ENCODE measurements at regions of chr16 and their contacts with region 1.

Region 1: DNA sequence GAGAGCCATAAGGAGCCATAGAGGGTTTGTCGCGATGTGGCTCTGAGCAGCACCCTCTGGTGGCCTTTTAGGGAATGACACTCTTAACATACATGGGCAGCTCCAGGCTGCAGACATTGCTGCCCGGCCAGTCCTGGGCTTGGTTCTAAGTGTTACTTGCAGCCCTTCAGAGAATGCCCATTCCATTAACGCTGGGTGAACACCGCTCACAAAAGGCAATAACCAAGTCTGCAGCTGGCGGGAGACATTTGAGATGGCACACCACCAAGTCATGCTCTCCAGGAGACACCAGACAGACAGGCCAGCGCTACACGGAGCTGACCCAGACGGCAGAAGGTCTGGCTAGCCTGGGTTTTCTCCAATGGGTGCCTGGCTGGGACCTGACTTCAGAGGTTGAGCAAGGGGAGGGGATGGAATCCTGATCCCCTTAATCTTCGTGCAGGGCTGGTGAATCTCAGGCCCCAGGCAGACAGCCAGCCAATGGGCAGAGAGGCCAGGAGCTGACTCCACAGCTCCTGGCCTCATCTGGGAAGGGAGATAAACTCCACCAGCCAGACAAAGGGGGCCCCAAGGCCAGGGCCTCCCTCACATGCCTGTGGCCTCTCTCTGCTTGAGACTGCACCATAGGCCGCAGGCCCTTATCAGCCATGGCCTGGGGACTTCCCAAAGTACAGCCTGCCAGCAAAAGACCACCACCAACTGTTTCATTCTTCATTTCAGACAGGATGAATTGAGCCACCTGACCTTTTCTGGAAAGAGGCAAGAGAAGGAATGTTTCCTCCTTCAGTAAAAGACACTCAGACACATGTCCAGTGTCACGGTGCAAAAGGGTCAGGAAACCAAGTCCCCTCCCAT is 58.8 kb downstream of the ZDHHC7 start:
- DNase-seq: peak; percentile 76
- ATAC-seq: peak; percentile 94
- H3K4me3 ChIP-seq: no peak overlapping the region
- H3K27ac ChIP-seq: no peak overlapping the region
- H3K4me1 ChIP-seq: peaks cover 0 to 3% of the 10 kb centered on the region in 2 experiments; a peak in 1 of 4 replicates
- H3K27me3 ChIP-seq: no peaks in the 10 kb centered on the region
- CTCF ChIP-seq: peak; percentile 93 to 96 (median 95)
- POLR2A ChIP-seq: no peak
- RAD21 ChIP-seq: peak; percentile 87

Region 2: DNA sequence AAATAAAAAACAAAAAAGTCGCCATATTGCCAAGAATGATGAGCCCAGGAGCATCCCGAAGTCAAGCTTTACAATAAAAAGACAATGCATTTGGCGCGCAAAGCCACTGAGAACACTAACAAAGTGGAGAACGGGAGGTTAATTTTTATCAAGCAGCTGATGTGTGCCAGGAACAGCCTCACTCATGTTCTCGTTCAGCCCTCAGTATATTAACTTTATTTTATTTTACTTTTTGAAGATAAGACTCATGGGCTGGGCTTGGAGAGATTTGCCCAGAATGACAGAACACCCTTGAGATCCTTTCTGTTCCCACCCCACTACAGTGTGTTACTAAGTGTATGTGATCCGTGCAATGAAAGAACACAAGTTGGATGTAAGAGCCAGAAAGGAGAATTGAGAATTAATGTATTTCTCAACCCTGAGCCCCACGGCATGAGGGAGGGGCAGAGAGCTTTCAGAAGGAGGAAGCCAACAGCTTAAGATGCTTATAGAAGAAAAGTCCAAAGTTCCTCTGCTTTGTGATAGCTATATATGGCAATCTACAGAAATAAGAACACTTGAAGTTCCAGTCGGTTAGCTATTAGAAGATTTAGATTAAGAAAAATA is 383.1 kb before region 1 on chr16:
- CTCF ChIA-PET with region 1: no interaction called
- POLR2A ChIA-PET with region 1: no interaction called
- RAD21 ChIA-PET with region 1: no interaction called
- intact Hi-C with region 1: no loop called
- DNase-seq: no peak
- ATAC-seq: no peak
- H3K4me3 ChIP-seq: no peak overlapping the region
- H3K27ac ChIP-seq: no peak overlapping the region
- H3K4me1 ChIP-seq: peaks cover 0 to 9% of the 10 kb centered on the region in 2 experiments; a peak in 1 of 4 replicates
- H3K27me3 ChIP-seq: no peaks in the 10 kb centered on the region
- CTCF ChIP-seq: no peak
- POLR2A ChIP-seq: no peak
- RAD21 ChIP-seq: no peak

Region 3: DNA sequence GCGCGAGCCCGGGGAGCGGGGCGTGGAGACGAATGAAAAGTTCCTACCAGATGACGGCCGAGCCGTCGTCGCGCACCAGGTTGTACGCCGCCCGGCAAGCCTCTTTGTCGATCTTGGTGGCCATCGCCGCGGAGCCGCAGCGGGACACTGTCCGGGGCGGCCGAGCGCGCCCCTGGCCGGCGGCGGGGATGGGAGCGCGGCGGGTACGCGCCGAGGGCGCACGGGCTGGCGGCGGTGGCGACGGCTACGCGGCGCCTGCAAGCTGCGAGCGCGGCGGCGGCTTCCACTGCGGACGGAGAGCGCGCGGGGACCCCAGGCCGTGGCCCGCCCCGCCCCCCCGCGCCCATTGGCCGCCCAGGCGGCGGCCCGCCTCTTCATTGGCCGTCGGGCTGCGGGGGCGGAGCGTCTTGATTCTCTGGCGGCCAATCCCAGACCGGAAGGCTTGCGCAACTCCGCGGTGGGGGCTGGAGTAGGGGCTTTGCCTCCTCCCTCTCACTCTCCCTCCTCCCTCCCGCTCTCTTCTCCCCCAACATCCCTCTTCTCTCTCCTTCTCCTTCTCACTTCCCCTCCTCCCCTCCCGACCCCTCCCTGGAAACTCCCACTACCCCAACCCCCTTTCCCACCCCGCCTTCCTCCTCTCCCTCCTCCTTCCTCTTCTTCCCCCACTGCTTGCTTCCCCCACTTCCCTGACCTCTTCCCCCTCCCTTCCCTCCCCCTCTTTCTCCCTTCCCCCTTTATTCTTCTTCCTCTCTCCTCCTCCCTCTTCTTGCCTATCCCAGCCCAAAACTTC is 334.6 kb before region 1 on chr16 and contains the start of gene COTL1:
- CTCF ChIA-PET with region 1: interaction called, 20 read pairs
- POLR2A ChIA-PET with region 1: no interaction called
- RAD21 ChIA-PET with region 1: interaction called in 1 of 2 experiments, 3 read pairs
- intact Hi-C with region 1: no loop called
- DNase-seq: peak; percentile 96
- ATAC-seq: peak; percentile 76
- H3K4me3 ChIP-seq: peak within 1 kb of the TSS; percentile 82 to 85
- H3K27ac ChIP-seq: peak within 1 kb of the TSS; percentile 86
- H3K4me1 ChIP-seq: peaks cover 18 to 64% of the 10 kb centered on the region in 2 experiments
- H3K27me3 ChIP-seq: no peaks in the 10 kb centered on the region
- CTCF ChIP-seq: no peak
- POLR2A ChIP-seq: peak; percentile 85
- RAD21 ChIP-seq: no peak
- total RNA-seq, gene COTL1: 276 TPM

Region 4: DNA sequence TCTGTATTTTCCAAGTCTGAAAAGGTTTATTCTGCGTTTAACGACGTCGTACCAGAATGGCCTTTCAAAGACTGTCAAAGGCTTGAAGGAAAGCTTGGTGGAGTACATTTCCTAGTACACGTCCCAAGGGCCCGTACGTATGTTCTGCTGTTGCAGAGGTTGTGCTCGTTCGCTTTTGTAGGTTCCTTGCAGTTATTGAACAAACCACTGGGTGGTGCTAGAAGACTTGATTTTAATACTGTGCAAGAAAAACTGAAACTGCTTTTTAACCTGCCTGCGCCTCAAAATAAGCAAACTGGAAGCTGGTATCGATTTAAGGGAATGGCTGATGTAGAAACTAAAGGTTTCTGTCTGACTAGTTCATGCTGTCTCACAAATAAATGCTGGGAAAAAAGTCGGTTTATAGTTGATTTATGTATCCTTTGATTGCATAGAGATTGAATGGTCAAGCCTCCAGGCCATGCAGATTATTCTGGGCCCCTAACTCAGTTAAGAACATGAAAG is 198.2 kb before region 1 on chr16:
- CTCF ChIA-PET with region 1: interaction called, 65 read pairs
- POLR2A ChIA-PET with region 1: interaction called, 3 read pairs
- RAD21 ChIA-PET with region 1: interaction called in 1 of 2 experiments, 4 read pairs
- intact Hi-C with region 1: loop called (anchors 1 kb)
- DNase-seq: peak; percentile 79
- ATAC-seq: peak; percentile 86
- H3K4me3 ChIP-seq: no peak overlapping the region
- H3K27ac ChIP-seq: no peak overlapping the region
- H3K4me1 ChIP-seq: peaks cover 0 to 13% of the 10 kb centered on the region in 2 experiments; a peak in 1 of 4 replicates
- H3K27me3 ChIP-seq: no peaks in the 10 kb centered on the region
- CTCF ChIP-seq: peak; percentile 82 to 97 (median 86)
- POLR2A ChIP-seq: no peak
- RAD21 ChIP-seq: peak; percentile 90

Region 5: DNA sequence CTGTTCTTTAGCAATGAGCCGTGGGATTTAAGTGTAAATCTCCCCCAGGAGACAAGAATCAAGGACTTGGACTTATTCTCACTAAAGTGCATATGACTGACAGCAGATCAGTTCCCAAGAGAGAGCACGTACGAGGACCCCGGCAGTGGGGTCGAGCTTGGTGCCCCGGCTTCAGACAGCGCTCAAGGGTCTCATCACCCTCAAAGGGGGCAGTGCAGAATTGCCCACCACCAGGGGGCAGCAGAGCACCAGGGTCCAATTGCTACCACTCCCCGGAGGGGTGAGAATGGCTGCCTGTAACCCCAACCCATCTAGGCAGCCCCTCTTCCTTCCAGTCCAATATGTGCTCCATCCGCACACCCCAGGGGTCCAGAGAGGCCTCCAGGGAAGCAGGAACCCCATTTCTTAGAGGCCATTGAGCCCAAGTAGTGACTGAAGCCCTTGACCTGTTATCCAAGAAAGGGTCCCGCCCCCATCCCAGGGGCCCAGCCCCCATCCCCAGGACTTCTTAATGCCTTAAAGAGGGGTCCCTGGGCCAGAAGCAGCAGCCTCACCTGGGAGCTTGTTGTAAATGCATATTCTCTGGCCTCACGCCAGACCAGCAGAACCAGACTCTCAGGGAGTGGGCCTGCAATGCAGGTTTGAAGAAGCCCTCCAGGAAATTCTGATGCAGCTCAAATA is 27.3 kb before region 1 on chr16:
- CTCF ChIA-PET with region 1: interaction called, 39 read pairs
- POLR2A ChIA-PET with region 1: no interaction called
- RAD21 ChIA-PET with region 1: interaction called, 4 to 7 read pairs
- intact Hi-C with region 1: loop called (anchors 1 kb)
- DNase-seq: peak; percentile 35
- ATAC-seq: peak; percentile 87
- H3K4me3 ChIP-seq: no peak overlapping the region
- H3K27ac ChIP-seq: no peak overlapping the region
- H3K4me1 ChIP-seq: peaks cover 0 to 12% of the 10 kb centered on the region in 2 experiments; a peak in 1 of 4 replicates
- H3K27me3 ChIP-seq: no peaks in the 10 kb centered on the region
- CTCF ChIP-seq: peak; percentile 95 to 100 (median 98)
- POLR2A ChIP-seq: no peak
- RAD21 ChIP-seq: peak; percentile 96

Region 6: DNA sequence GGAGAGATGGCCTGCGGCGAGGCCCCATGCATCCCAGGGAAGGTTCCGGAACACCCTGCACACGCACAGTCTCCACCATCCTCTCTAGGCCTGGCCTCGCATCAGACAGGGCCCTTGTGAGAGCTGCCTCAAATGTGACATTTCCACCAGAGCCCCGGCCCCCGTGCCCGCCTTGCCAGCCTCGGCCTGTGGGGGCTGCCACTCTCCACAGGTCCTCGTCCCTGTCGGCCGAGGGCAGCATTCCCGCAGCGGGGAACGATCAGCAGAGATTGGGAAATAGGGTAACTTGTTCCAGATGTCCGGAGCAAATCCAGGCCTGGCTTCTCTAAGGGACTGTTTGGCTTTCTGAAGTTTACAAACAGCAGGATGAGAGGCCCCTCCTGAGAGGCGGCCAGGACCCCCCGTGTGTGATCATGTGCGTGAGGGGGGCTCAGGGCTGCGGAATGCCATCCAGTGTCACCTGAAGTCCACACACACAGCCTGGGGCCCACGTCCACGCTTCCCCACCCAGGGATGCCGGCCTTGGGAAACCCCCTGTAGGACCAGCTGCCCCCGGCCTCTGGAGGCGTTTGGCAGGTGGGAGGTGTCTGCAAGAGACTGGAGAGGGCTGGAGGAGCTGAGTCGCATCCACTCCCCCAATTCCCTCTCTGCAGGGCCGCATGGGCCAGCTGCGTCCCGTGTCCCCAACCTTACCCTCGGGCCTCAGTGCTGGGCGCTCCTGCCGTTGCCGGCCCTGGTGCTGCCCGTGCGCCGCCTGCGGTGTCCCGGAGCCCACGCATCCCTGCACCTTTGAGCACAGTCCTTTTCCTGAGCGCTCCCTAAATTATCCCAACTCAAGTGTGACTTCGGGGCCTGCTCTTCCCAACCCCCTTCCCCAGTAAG is 11.7 kb before region 1 on chr16:
- CTCF ChIA-PET with region 1: interaction called, 30 read pairs
- POLR2A ChIA-PET with region 1: no interaction called
- RAD21 ChIA-PET with region 1: no interaction called
- intact Hi-C with region 1: no loop called
- DNase-seq: no peak
- ATAC-seq: no peak
- H3K4me3 ChIP-seq: no peak overlapping the region
- H3K27ac ChIP-seq: no peak overlapping the region
- H3K4me1 ChIP-seq: peaks cover 0 to 11% of the 10 kb centered on the region in 2 experiments; a peak in 2 of 4 replicates
- H3K27me3 ChIP-seq: no peaks in the 10 kb centered on the region
- CTCF ChIP-seq: no peak
- POLR2A ChIP-seq: no peak
- RAD21 ChIP-seq: no peak

Measured in HCT116 (cell line).